CD8-positive, alpha-beta memory T cell (primary cell): ENCODE measurements at regions of chr11 and their contacts with region 1.

Region 1: GRCh38 chr11:65888163-65888814 is at the start of gene FIBP:
- DNase-seq: peak; percentile 89 to 98 (median 95)
- H3K4me3 ChIP-seq: peak within 1 kb of the TSS; percentile 94
- H3K4me3 Mint-ChIP-seq: peak within 1 kb of the TSS; percentile 83 to 97 (median 92)
- H3K27ac ChIP-seq: peak within 1 kb of the TSS; percentile 87
- H3K27ac Mint-ChIP-seq: peak within 1 kb of the TSS; percentile 84 to 100 (median 96)
- H3K4me1 ChIP-seq: peaks cover 48% of the 10 kb centered on the region
- H3K4me1 Mint-ChIP-seq: peaks cover 54 to 71% (median 69%) of the 10 kb centered on the region in 3 donors
- H3K27me3 ChIP-seq: no peaks in the 10 kb centered on the region
- H3K27me3 Mint-ChIP-seq: no peaks in the 10 kb centered on the region
- total RNA-seq, gene FIBP: 121 to 123 TPM

Region 2: GRCh38 chr11:65711785-65712632 is 176.3 kb before region 1 on chr11 and contains the start of gene KAT5:
- CTCF ChIA-PET with region 1: interaction called, 25 read pairs
- POLR2A ChIA-PET with region 1: interaction called, 3 read pairs
- DNase-seq: peak; percentile 97 to 99 (median 98)
- H3K4me3 ChIP-seq: peak within 1 kb of the TSS; percentile 74
- H3K4me3 Mint-ChIP-seq: peak within 1 kb of the TSS; percentile 94 to 99 (median 96)
- H3K27ac ChIP-seq: peak within 1 kb of the TSS; percentile 94
- H3K27ac Mint-ChIP-seq: peak within 1 kb of the TSS; percentile 98 to 100 (median 99)
- H3K4me1 ChIP-seq: peaks cover 19% of the 10 kb centered on the region
- H3K4me1 Mint-ChIP-seq: peaks cover 20 to 32% (median 20%) of the 10 kb centered on the region in 3 donors
- H3K27me3 ChIP-seq: no peaks in the 10 kb centered on the region
- H3K27me3 Mint-ChIP-seq: no peaks in the 10 kb centered on the region
- total RNA-seq, gene KAT5: 79.9 to 87.1 TPM

Region 3: GRCh38 chr11:65850831-65851811 is 37.2 kb before region 1 on chr11:
- CTCF ChIA-PET with region 1: interaction called, 16 read pairs
- POLR2A ChIA-PET with region 1: no interaction called
- DNase-seq: no peak
- H3K4me3 ChIP-seq: no peak overlapping the region
- H3K4me3 Mint-ChIP-seq: no peak overlapping the region
- H3K27ac ChIP-seq: no peak overlapping the region
- H3K27ac Mint-ChIP-seq: peak overlapping the region in 4 of 8 donors; percentile 38 to 70 (median 48)
- H3K4me1 ChIP-seq: peaks cover 32% of the 10 kb centered on the region
- H3K4me1 Mint-ChIP-seq: peaks cover 30 to 36% (median 33%) of the 10 kb centered on the region in 3 donors
- H3K27me3 ChIP-seq: no peaks in the 10 kb centered on the region
- H3K27me3 Mint-ChIP-seq: no peaks in the 10 kb centered on the region

Region 4: DNA sequence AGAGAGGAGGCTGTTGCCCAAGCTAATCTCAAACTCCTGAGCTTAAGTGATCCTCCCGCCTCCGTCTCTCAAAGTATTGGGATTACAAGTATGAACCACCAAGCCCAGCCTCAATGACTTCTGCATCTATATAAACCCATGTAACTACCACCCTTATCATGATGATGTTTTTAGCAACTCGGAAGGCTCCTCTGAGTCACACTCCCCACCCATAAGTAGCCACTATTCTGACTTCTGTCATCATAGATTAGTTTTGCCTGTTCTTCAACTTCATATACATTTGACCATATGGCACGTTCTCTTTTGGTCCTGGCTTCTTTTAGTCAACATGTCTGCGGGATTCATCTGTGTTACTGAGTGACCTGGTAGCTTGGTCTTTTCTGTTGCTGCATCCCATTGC is 18.3 kb after region 1 on chr11:
- CTCF ChIA-PET with region 1: interaction called, 79 read pairs
- POLR2A ChIA-PET with region 1: interaction called, 32 read pairs
- DNase-seq: no peak
- H3K4me3 ChIP-seq: no peak overlapping the region
- H3K4me3 Mint-ChIP-seq: no peak overlapping the region
- H3K27ac ChIP-seq: peak overlapping the region; percentile 35
- H3K27ac Mint-ChIP-seq: no peak overlapping the region
- H3K4me1 ChIP-seq: no peaks in the 10 kb centered on the region
- H3K4me1 Mint-ChIP-seq: peaks cover 5 to 8% (median 7%) of the 10 kb centered on the region in 3 donors
- H3K27me3 ChIP-seq: no peaks in the 10 kb centered on the region
- H3K27me3 Mint-ChIP-seq: peaks cover 0 to 11% of the 10 kb centered on the region in 2 donors

Region 5: GRCh38 chr11:65958774-65959420 is 70.6 kb after region 1 on chr11:
- CTCF ChIA-PET with region 1: interaction called, 14 read pairs
- POLR2A ChIA-PET with region 1: interaction called, 7 read pairs
- DNase-seq: no peak
- H3K4me3 ChIP-seq: no peak overlapping the region
- H3K4me3 Mint-ChIP-seq: no peak overlapping the region
- H3K27ac ChIP-seq: no peak overlapping the region
- H3K27ac Mint-ChIP-seq: peak overlapping the region in 1 of 8 donors; percentile 23
- H3K4me1 ChIP-seq: peaks cover 39% of the 10 kb centered on the region
- H3K4me1 Mint-ChIP-seq: peaks cover 31 to 45% (median 43%) of the 10 kb centered on the region in 3 donors
- H3K27me3 ChIP-seq: no peaks in the 10 kb centered on the region
- H3K27me3 Mint-ChIP-seq: no peaks in the 10 kb centered on the region

Region 6: GRCh38 chr11:66022401-66023185 is 134.3 kb after region 1 on chr11:
- CTCF ChIA-PET with region 1: interaction called, 13 read pairs
- POLR2A ChIA-PET with region 1: no interaction called
- DNase-seq: peak; percentile 63 to 80 (median 71)
- H3K4me3 ChIP-seq: no peak overlapping the region
- H3K4me3 Mint-ChIP-seq: peak overlapping the region in 5 of 7 donors; percentile 27 to 51 (median 28)
- H3K27ac ChIP-seq: no peak overlapping the region
- H3K27ac Mint-ChIP-seq: no peak overlapping the region
- H3K4me1 ChIP-seq: peaks cover 7% of the 10 kb centered on the region
- H3K4me1 Mint-ChIP-seq: peaks cover 5 to 9% (median 6%) of the 10 kb centered on the region in 3 donors
- H3K27me3 ChIP-seq: no peaks in the 10 kb centered on the region
- H3K27me3 Mint-ChIP-seq: peaks cover 3 to 8% of the 10 kb centered on the region in 2 donors